Calu3 (cell line): ENCODE measurements at regions of chr11 and their contacts with region 1.

Region 1: DNA sequence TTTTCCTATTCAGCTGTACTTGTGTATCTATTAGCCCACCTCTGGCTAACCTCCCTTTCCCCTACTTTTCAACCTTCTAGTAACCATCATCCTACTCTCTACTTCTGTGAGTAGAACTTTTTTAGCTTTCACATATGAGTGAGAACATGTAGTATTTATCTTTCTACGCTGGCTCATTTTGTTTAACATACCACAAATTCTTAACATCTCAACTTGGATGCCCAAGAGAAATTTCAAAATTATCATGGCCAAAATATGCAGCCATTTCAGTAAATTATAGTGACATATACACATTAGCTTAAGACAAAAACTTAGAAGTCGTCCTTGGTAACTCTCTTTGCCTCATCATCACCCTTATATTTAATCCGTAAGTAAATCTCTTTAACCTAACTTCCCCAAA is 34.7 kb downstream of the LUZP2 start:
- DNase-seq: no peak
- H3K4me3 Mint-ChIP-seq: no peak overlapping the region
- H3K27ac Mint-ChIP-seq: no peak overlapping the region
- H3K4me1 Mint-ChIP-seq: no peaks in the 10 kb centered on the region
- H3K27me3 Mint-ChIP-seq: no peaks in the 10 kb centered on the region
- CTCF ChIP-seq: no peak

Region 2: DNA sequence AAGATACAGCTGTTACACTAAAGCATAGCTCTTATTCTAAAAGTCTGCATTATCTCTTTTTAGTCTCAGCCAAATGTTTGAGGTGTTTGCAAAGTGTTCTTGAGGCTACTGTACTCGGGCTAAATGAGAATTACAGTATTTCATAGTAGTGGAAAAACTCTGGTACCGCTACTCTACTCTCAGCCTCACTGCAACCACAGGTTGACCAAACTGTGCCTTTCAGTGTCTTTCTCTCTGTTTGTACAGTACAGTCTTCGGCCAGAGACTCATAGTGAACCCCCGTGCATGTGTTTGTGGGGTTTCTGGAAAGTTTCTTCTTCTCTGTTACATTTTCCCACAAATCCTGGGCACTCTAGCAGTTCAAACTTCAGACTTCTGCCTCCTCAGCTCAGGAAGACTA is 42.1 kb before region 1 on chr11:
- CTCF ChIA-PET with region 1: no interaction called
- intact Hi-C with region 1: no loop called
- DNase-seq: no peak
- H3K4me3 Mint-ChIP-seq: no peak overlapping the region
- H3K27ac Mint-ChIP-seq: no peak overlapping the region
- H3K4me1 Mint-ChIP-seq: no peaks in the 10 kb centered on the region
- H3K27me3 Mint-ChIP-seq: no peaks in the 10 kb centered on the region
- CTCF ChIP-seq: no peak

Region 3: GRCh38 chr11:24593332-24593731 is 61.8 kb after region 1 on chr11:
- CTCF ChIA-PET with region 1: no interaction called
- intact Hi-C with region 1: loop called (anchors 5 kb)
- DNase-seq: no peak
- H3K4me3 Mint-ChIP-seq: no peak overlapping the region
- H3K27ac Mint-ChIP-seq: no peak overlapping the region
- H3K4me1 Mint-ChIP-seq: peaks cover 24% of the 10 kb centered on the region
- H3K27me3 Mint-ChIP-seq: no peaks in the 10 kb centered on the region
- CTCF ChIP-seq: no peak